B cell (primary cell): ENCODE measurements at regions of chr16 and their contacts with region 1.

Region 1: DNA sequence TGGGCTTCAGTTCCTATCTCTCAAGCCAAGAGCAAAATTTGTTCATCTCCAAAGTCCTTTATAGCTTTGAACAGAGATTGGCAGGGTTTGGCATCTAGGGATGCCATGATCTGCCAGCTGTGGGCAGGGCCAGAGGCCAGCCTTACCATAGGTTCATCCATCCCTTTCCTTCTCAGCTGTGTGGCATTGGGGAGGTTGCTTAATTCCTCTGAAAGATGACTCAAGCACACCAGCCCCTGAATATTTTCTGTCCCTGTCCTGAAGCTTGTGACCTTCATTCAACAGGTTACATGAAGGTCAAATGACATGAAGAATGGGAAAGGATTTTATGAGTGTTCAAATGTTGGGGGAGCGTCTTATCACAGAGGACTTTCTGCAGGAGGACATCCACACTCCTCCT is 3.4 kb downstream of the MT1G start:
- DNase-seq: no peak
- ATAC-seq: no peak
- H3K4me3 ChIP-seq: no peak overlapping the region
- H3K4me3 Mint-ChIP-seq: no peak overlapping the region
- H3K27ac ChIP-seq: no peak overlapping the region
- H3K27ac Mint-ChIP-seq: no peak overlapping the region
- H3K4me1 ChIP-seq: peaks cover 12 to 14% of the 10 kb centered on the region in 2 donors
- H3K4me1 Mint-ChIP-seq: peaks cover 15% of the 10 kb centered on the region
- H3K27me3 ChIP-seq: peaks cover 0 to 63% (median 32%) of the 10 kb centered on the region in 4 experiments
- H3K27me3 Mint-ChIP-seq: peaks cover 77% of the 10 kb centered on the region
- CTCF ChIP-seq: no peak

Region 2: GRCh38 chr16:56226187-56226586 is 438.3 kb before region 1 on chr16:
- CTCF ChIA-PET with region 1: no interaction called
- POLR2A ChIA-PET with region 1: no interaction called
- intact Hi-C with region 1: no loop called
- DNase-seq: no peak
- ATAC-seq: no peak
- H3K4me3 ChIP-seq: no peak overlapping the region
- H3K4me3 Mint-ChIP-seq: no peak overlapping the region
- H3K27ac ChIP-seq: no peak overlapping the region
- H3K27ac Mint-ChIP-seq: no peak overlapping the region
- H3K4me1 ChIP-seq: peaks cover 0 to 11% of the 10 kb centered on the region in 2 donors
- H3K4me1 Mint-ChIP-seq: peaks cover 18% of the 10 kb centered on the region
- H3K27me3 ChIP-seq: peaks cover 0 to 3% (median 0%) of the 10 kb centered on the region in 4 experiments
- H3K27me3 Mint-ChIP-seq: peaks cover 15% of the 10 kb centered on the region
- CTCF ChIP-seq: no peak

Region 3: DNA sequence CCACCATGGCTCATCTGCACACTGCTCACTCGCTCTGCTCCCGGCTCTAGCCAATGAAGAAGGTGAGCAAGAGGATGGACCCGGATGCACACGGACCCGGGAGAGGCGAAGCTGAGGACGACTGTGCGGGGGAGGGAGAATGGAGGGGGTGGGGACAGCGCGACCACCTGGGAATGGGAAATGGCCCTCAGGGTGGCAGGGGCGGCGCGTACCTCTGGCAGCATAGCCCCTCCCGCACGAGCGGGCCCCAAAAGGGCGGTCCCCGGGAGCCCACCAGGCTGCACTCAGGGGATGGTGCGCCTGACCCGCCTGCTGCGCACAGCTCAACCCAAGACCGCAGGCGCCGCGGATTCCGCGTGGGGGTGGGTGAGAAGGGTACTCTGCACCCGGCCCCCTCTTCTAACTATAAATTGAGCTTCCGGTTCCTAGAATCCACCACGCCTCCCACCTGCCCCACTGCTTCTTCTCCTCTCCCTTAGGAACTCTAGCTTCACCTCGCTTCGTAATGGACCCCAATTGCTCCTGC is 11.2 kb after region 1 on chr16:
- CTCF ChIA-PET with region 1: no interaction called
- POLR2A ChIA-PET with region 1: no interaction called
- intact Hi-C with region 1: no loop called
- DNase-seq: no peak
- ATAC-seq: no peak
- H3K4me3 ChIP-seq: peak overlapping the region in 2 of 5 experiments; percentile 5 to 8
- H3K4me3 Mint-ChIP-seq: peak overlapping the region; percentile 30
- H3K27ac ChIP-seq: no peak overlapping the region
- H3K27ac Mint-ChIP-seq: no peak overlapping the region
- H3K4me1 ChIP-seq: peaks cover 10% of the 10 kb centered on the region in 2 donors
- H3K4me1 Mint-ChIP-seq: peaks cover 7% of the 10 kb centered on the region
- H3K27me3 ChIP-seq: peaks cover 0 to 39% (median 18%) of the 10 kb centered on the region in 4 experiments
- H3K27me3 Mint-ChIP-seq: peaks cover 55% of the 10 kb centered on the region
- CTCF ChIP-seq: no peak

Region 4: DNA sequence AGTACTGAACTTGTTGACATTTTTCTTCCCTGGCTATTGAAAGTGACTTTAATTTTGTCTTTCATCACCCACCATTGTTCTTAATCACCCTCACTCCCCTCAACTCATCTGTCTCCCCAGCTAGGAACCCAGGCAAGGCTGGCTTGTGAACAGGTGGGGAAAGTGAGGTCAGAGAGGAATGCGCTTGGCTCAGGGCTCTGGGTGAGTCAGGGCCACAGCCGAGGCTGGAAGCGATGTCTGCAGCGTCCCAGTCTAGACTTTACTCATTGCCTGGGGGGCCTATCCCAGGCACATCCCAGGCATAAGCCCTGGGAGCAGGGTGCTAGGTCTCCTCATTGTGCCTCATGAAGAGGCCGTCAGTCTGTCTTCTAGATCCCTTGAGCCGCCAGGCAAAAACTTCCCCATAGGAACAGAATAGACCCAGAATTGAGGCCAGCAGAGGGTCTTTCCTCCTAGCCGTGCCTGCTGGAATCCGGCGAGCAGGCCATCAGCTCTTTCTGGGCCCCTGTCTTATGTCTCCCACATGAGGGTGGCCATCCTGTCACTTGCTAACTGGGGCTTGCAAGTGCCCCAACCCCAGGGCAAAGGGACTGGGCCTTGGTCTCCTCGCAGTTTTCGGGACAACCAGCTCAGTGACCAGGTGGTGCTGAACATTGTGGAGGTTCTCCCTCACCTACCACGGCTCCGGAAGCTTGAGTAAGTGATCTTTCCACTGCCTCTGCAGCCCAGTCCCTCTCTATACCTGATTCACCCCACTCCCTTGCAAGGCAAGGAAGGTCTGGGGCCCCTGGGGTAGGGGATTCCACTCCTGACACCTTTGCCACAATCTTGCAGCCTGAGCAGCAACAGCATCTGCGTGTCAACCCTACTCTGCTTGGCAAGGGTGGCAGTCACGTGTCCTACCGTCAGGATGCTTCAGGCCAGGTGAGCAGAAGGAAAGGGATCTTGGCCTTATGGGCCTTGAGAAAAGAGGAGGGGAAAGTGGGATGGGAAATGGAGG is 365.0 kb after region 1 on chr16:
- CTCF ChIA-PET with region 1: no interaction called
- POLR2A ChIA-PET with region 1: interaction called, 11 read pairs
- intact Hi-C with region 1: no loop called
- DNase-seq: no peak
- ATAC-seq: no peak
- H3K4me3 ChIP-seq: no peak overlapping the region
- H3K4me3 Mint-ChIP-seq: no peak overlapping the region
- H3K27ac ChIP-seq: no peak overlapping the region
- H3K27ac Mint-ChIP-seq: peak overlapping the region; percentile 32
- H3K4me1 ChIP-seq: peaks cover 0 to 39% of the 10 kb centered on the region in 2 donors
- H3K4me1 Mint-ChIP-seq: peaks cover 31% of the 10 kb centered on the region
- H3K27me3 ChIP-seq: no peaks in the 10 kb centered on the region
- H3K27me3 Mint-ChIP-seq: no peaks in the 10 kb centered on the region
- CTCF ChIP-seq: no peak